Lower leg skin (tissue), 4 donors: ENCODE measurements at regions of chr12 and their contacts with region 1.

Region 1: GRCh38 chr12:133037207-133038005 is at the start of gene ZNF84:
- DNase-seq: peak; percentile 96 to 99
- H3K4me3 ChIP-seq: peak within 1 kb of the TSS; percentile 55
- CTCF ChIP-seq: no peak
- POLR2A ChIP-seq: no peak
- total RNA-seq, gene ZNF84: 15.7 to 18.9 (median 16.4) TPM

Region 2: GRCh38 chr12:132710422-132711168 is 326.8 kb before region 1 on chr12 and contains the start of gene PGAM5:
- intact Hi-C with region 1: no loop called
- DNase-seq: peak; percentile 65 to 95
- H3K4me3 ChIP-seq: peak within 1 kb of the TSS; percentile 71
- CTCF ChIP-seq: no peak
- POLR2A ChIP-seq: no peak
- total RNA-seq, gene PGAM5: 28.1 to 54.6 (median 32.8) TPM

Region 3: DNA sequence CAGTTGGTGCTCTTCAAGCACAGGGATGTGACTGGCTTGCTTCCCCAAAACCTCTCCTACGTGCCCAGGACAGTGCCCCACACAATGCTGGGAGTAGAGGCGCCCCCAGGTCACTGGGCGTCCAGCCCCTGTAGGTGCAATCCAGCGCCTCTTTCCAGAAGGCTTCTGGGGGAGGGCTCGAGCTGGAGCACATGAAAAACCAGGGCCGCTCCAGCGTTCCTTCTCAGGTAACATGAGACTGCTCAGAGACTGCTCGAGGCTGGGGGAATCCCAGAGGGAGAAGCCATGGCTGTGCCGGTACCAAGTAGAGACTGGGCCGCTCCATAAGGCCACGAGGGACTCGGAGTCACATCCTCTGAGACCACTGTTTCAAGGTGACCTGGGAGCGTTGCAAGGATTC is 40.7 kb after region 1 on chr12:
- intact Hi-C with region 1: loop called (anchors 5 kb)
- DNase-seq: no peak
- H3K4me3 ChIP-seq: no peak overlapping the region
- CTCF ChIP-seq: no peak
- POLR2A ChIP-seq: no peak